Panc1 (cell line): ENCODE measurements at regions of chr11 and their contacts with region 1.

Region 1: DNA sequence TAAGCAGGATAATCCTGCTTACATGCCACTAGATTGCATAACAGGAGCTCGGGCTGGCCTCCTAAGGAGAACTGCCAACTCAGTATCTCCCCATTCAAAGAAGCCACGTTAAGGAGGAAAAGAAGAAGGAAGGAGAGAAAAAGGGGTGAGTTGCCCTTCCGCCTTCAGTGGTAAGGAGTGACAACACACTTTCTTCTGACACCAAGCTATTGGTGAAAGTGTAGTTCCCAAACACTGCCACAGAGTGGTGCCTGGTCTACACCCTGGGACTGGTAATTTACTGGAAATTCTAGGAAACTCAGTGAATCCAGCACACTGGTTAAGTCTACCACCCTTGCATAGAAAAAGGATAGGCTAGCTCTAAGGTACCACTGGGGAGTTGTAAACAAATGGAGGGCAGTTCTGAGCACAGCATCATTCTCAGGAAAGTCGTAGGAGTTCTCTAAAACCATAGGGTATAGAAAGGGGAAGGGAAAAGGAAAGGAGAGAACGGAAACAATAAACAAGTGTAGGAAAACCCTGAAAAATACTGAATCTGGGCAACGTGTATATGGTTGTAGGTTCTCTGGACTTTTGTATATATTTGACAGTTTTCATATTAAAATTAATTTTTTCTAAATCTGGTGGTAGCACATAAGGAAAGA is 58.2 kb downstream of the RRAS2 start:
- DNase-seq: peak; percentile 58
- ATAC-seq: peak; percentile 96
- H3K4me3 ChIP-seq: no peak overlapping the region
- H3K27ac ChIP-seq: no peak overlapping the region
- H3K4me1 ChIP-seq: no peaks in the 10 kb centered on the region
- H3K27me3 ChIP-seq: no peaks in the 10 kb centered on the region
- CTCF ChIP-seq: peak; percentile 89

Region 2: GRCh38 chr11:14288189-14288935 is 12.4 kb before region 1 on chr11:
- CTCF ChIA-PET with region 1: no interaction called
- POLR2A ChIA-PET with region 1: interaction called, 16 read pairs
- in situ Hi-C with region 1: no loop called
- intact Hi-C with region 1: no loop called
- DNase-seq: no peak
- ATAC-seq: no peak
- H3K4me3 ChIP-seq: no peak overlapping the region
- H3K27ac ChIP-seq: no peak overlapping the region
- H3K4me1 ChIP-seq: no peaks in the 10 kb centered on the region
- H3K27me3 ChIP-seq: no peaks in the 10 kb centered on the region
- CTCF ChIP-seq: no peak

Region 3: GRCh38 chr11:14418803-14419417 is 118.1 kb after region 1 on chr11:
- CTCF ChIA-PET with region 1: interaction called, 15 read pairs
- POLR2A ChIA-PET with region 1: no interaction called
- in situ Hi-C with region 1: no loop called
- intact Hi-C with region 1: loop called (anchors 2 kb)
- DNase-seq: no peak
- ATAC-seq: peak; percentile 65; the same call in 1 of the 2 replicates
- H3K4me3 ChIP-seq: no peak overlapping the region
- H3K27ac ChIP-seq: no peak overlapping the region
- H3K4me1 ChIP-seq: peaks cover 9% of the 10 kb centered on the region
- H3K27me3 ChIP-seq: no peaks in the 10 kb centered on the region
- CTCF ChIP-seq: peak; percentile 81